ENCODE measurements at regions of chr16 and their contacts with region 1.

Region 1: GRCh38 chr16:10918294-10919002 is 23.8 kb downstream of the DEXI start:
- DNase-seq: peak; percentile 83

Region 2: DNA sequence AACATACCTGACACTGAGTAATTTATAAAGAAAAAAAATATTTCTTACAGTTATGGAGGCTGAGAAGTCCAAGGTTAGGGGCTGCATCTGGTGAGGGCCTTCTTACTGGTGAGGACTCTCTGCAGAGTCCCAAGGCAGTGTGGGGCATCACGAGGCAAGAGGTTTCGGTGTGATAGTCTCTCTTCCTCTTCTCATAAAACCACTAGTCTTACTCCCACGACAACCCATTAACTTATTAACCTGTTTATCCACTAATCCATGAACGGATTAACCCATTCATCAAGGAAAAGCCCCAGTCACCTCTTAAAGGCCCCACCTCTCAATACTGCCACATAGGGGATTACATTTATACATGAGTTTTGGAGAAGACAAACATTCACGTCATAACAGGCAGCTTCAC is 21.3 kb before region 1 on chr16:
- CTCF ChIA-PET with region 1: no interaction called
- POLR2A ChIA-PET with region 1: no interaction called
- DNase-seq: no peak

Region 3: GRCh38 chr16:10906914-10907756 is 11.3 kb before region 1 on chr16:
- CTCF ChIA-PET with region 1: interaction called, 11 read pairs
- POLR2A ChIA-PET with region 1: no interaction called
- DNase-seq: no peak

Region 4: DNA sequence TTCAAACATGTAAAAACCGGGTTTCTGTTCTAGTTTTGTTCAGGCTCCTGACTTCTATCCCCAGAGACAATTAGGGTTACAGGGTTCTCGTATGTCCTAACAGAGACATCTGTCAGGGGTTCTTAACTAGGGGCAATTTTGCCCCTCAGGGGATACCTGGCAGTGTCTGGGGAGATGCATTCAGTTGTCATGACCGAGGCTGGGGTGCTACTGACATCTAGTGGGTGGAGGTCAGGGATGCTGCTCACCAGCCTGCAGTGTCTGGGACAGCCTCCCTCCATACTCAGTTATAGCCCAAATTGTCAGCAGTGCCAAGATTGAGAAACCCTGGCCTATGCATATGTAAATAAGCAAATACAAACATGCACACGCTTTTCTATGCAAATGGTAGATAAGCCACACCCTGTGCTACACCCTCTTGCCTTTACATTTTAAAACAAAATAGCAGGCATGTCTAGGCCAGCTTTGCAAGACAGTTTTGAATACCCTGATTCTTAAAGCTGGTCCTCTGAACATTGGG is 63.3 kb after region 1 on chr16:
- CTCF ChIA-PET with region 1: no interaction called
- POLR2A ChIA-PET with region 1: no interaction called
- DNase-seq: peak; percentile 32

Measured in HEK293T (cell line).